A549 (cell line): ENCODE measurements at regions of chr6 and their contacts with region 1.

Region 1: GRCh38 chr6:44265007-44265721 is at the start of gene NFKBIE:
- DNase-seq: peak; percentile 80 to 84
- ATAC-seq: peak; percentile 73 to 83
- H3K4me3 ChIP-seq: peak within 1 kb of the TSS; percentile 81
- H3K27ac ChIP-seq: peak within 1 kb of the TSS; percentile 81 to 90
- H3K4me1 ChIP-seq: peaks cover 23% of the 10 kb centered on the region
- CTCF ChIP-seq: peak; percentile 19; the same call in 2 of the 3 replicates
- EP300 ChIP-seq: no peak
- POLR2A ChIP-seq: peak; percentile 81
- RAD21 ChIP-seq: no peak; a peak in 1 of 5 replicates
- polyA plus RNA-seq, gene NFKBIE: 6.2 and 6.3 TPM in 2 replicates

Region 2: DNA sequence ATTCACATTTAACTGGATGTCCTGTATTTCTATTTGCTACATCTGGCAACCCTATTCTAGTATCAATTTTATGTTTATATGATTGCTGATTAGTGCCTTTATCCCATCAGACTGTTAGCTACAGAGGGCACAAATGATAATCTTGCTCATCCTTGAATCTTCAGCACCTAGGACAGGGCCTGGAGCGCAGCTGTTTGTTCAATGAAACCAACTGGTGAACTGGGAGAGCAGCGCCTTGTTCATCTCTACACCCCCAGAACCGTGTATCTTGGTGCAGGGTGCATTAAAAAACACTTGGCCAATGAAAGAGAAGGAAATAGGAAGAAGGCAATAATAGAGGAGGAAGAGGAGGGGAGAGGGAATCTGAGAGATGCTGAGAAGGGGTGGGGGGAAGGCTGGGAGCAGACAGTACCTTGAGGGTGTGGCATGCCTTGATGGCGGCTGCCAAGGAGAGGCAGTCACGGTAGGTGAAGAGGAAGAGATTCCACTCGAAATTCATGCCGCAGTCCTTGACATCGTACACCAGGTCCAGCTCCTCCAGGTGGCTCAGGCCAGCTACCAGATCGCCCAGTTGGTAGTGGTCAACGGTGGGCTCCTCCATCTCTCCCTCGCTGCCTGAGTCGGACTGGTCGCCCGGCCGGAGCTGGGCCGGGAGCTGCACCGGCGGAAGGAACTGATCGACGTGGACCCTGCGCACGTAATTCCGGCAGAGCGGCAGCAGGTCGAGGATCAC is 20.6 kb after region 1 on chr6:
- CTCF ChIA-PET with region 1: interaction called, 25 read pairs
- POLR2A ChIA-PET with region 1: no interaction called
- DNase-seq: no peak
- ATAC-seq: 0 out of 6 replicates have a peak, but pooled peaks of 1 of the 2 experiments have one; percentile 42
- H3K4me3 ChIP-seq: no peak overlapping the region
- H3K27ac ChIP-seq: no peak overlapping the region
- H3K4me1 ChIP-seq: no peaks in the 10 kb centered on the region
- CTCF ChIP-seq: no peak
- EP300 ChIP-seq: no peak
- POLR2A ChIP-seq: no peak
- RAD21 ChIP-seq: no peak

Region 3: GRCh38 chr6:44297063-44298038 is 32.2 kb after region 1 on chr6:
- CTCF ChIA-PET with region 1: interaction called, 44 read pairs
- POLR2A ChIA-PET with region 1: no interaction called
- DNase-seq: no peak
- ATAC-seq: peak; percentile 65 to 71; a peak in 5 of 6 replicates
- H3K4me3 ChIP-seq: peak overlapping the region; percentile 40
- H3K27ac ChIP-seq: peak overlapping the region in 1 of 2 experiments; percentile 77; a peak in 3 of 6 replicates
- H3K4me1 ChIP-seq: no peaks in the 10 kb centered on the region
- CTCF ChIP-seq: no peak
- EP300 ChIP-seq: no peak
- POLR2A ChIP-seq: 0 out of 2 replicates have a peak, but pooled peaks have one; percentile 19
- RAD21 ChIP-seq: no peak

Region 4: DNA sequence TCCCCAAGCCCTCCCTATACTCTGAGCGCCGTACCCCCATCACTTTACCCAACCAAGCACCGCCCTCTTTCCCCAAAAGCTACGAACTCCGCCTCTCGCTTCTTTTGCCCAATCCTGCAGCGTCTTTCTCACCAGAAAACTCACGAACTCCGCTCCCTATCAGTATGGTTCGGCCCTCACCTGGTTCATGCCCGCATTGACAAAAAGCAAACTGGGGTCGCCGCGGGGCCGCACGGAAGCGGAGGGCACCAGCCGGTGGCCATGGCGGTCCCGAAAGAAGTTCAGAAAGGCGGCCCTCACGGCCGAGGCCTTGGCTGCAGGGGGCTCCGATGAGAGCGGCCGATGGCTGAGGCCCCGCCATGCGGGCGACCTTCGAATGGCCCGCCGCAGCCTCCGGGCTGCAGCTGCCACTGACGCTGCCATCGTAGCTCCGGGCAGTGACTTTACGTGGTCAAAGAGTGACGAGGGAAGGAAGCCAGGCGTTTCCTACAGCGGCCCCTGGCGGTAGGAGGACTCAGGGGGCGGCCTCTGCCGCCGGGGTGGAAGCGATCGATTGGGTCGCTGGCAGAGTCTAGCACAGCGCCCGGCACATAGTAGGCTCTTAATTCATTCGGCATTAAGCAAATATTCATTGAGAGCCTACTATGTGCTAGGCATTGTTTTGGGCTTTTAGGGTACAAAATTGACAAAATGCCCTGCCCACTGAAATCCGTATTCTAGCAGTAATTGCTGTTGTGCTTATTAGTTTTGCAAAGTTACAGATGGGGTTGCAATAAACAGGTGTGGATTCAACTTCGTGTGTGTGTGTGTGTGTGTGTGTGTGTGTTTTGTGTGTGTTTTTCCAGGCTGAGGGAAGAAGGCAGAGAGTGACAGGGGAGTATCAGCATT is 48.0 kb after region 1 on chr6 and contains the start of gene AARS2:
- CTCF ChIA-PET with region 1: interaction called, 24 read pairs
- POLR2A ChIA-PET with region 1: no interaction called
- DNase-seq: peak; percentile 56 to 82
- ATAC-seq: peak; percentile 98 to 99
- H3K4me3 ChIP-seq: peak within 1 kb of the TSS; percentile 76
- H3K27ac ChIP-seq: peak within 1 kb of the TSS; percentile 80 to 99
- H3K4me1 ChIP-seq: peaks cover 7% of the 10 kb centered on the region; the same call in 2 of the 3 replicates
- CTCF ChIP-seq: peak; percentile 79
- EP300 ChIP-seq: no peak
- POLR2A ChIP-seq: peak; percentile 85
- RAD21 ChIP-seq: no peak; a peak in 1 of 5 replicates
- polyA plus RNA-seq, gene AARS2: 4.0 and 4.3 TPM in 2 replicates

Region 5: DNA sequence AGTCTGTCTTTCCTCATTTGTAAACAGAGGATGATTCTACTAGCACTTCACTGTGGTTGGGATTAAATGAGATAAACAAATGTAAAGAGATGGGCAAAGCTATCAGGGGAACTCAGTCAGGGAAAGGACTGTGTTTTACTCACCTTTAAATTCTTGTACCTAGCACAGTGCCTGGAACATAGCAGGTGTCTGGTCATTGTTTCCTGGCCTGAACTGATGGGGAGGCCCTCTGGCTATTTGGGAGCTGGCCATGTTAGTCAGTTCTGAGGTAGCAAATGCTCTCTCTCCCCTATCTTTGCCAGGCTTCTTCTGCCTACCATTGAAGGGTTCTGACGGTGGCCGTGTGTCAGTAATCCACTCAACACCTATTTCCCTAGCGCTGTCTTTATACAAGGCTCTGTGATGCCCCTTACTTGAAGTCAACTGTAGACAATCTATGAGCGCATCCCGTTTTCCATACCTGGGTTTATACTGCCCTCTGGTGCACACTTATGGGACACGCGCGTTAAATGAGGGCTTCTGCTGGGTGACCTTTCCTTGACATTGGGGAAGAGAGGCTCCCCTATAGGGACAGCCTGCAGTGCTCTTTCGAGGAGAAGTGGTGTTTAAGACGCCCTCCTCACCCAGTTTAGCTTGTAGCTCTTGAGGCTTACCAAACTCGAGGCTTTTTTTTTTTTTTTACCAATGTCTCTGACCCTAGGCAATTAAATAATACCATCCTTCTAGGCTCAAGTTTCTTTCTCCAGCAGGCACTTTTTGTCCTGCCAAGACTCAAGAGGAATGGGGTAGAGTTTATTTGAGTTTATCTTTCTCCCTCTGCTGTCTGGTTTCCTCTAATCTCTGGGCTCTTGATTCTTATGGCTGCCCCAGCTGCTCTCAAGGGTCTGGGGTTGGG is 73.3 kb after region 1 on chr6:
- CTCF ChIA-PET with region 1: interaction called, 181 read pairs
- POLR2A ChIA-PET with region 1: no interaction called
- DNase-seq: peak; percentile 33 to 60
- ATAC-seq: peak; percentile 89 to 92
- H3K4me3 ChIP-seq: no peak overlapping the region
- H3K27ac ChIP-seq: no peak overlapping the region
- H3K4me1 ChIP-seq: no peaks in the 10 kb centered on the region
- CTCF ChIP-seq: peak; percentile 74
- EP300 ChIP-seq: no peak
- POLR2A ChIP-seq: no peak
- RAD21 ChIP-seq: peak; percentile 79 to 87

Region 6: DNA sequence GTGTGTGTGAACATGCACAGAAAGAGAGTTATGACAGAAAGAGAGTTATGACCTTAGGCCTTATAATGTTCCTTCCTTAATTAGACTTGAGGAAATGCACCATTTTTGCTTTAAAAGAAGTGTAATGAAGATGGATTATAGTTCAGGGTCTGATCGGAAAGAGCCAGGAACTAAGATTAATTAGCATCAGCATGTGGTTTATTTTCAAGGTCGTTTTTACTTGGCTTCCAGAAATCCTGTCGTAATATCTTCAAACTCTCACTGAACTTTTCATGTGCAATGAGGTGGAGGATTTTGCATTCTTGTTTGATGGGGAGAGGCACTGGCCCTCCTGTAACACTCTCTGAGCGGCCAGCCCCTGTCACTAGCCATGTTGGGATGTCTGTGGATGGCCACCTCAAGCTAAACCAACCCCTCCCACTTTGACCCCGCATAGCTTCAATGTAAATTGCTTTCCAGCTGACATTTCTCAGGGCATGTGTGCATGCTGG is 239.2 kb after region 1 on chr6:
- CTCF ChIA-PET with region 1: no interaction called
- POLR2A ChIA-PET with region 1: no interaction called
- DNase-seq: no peak
- ATAC-seq: no peak
- H3K4me3 ChIP-seq: no peak overlapping the region
- H3K27ac ChIP-seq: no peak overlapping the region
- H3K4me1 ChIP-seq: no peaks in the 10 kb centered on the region
- CTCF ChIP-seq: no peak
- EP300 ChIP-seq: no peak
- POLR2A ChIP-seq: no peak
- RAD21 ChIP-seq: no peak